ENCODE measurements at regions of chr18 and their contacts with region 1.

Region 1: GRCh38 chr18:58321986-58322385 is 278.0 kb downstream of the NEDD4L start:
- DNase-seq: peak; percentile 80
- H3K4me3 Mint-ChIP-seq: no peak overlapping the region
- H3K27ac Mint-ChIP-seq: no peak overlapping the region
- H3K4me1 Mint-ChIP-seq: peaks cover 16% of the 10 kb centered on the region
- H3K27me3 Mint-ChIP-seq: no peaks in the 10 kb centered on the region

Region 2: DNA sequence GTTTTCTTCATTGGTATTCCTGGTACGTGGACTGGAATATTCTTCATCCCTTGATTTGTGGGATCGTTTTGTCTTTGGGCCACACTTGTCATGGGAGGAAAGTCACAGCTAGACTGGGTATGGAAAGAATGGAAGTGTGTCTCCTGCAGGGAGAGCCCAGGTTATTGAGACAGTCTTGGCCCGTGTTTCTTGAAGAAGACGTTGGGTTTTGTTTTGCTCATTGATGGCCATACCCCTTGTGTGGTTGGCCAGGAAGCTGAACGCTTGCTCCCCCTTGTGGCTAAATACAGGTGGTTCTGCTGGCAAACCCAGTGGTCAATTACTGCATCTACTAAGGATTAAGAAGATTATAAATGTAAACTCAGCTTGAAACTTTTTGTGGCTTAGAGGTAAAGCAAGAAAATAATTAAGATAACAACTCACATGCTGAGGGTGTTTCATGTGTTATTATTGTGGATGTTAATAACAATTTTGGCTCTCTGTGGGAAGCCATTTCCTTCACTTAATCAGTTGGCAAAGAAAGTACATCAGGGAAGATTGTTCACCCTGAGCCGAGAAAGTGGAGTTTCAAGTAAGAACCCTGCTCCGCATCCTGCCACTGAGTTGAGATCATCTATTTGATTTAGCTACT is 186.2 kb before region 1 on chr18:
- CTCF ChIA-PET with region 1: no interaction called
- intact Hi-C with region 1: loop called (anchors 1 kb)
- DNase-seq: peak; percentile 74
- H3K4me3 Mint-ChIP-seq: no peak overlapping the region
- H3K27ac Mint-ChIP-seq: no peak overlapping the region
- H3K4me1 Mint-ChIP-seq: peaks cover 7% of the 10 kb centered on the region
- H3K27me3 Mint-ChIP-seq: peaks cover 9% of the 10 kb centered on the region

Region 3: GRCh38 chr18:58195278-58195765 is 126.7 kb before region 1 on chr18:
- CTCF ChIA-PET with region 1: interaction called, 5 read pairs
- intact Hi-C with region 1: loop called (anchors 1 kb)
- DNase-seq: peak; percentile 36
- H3K4me3 Mint-ChIP-seq: peak overlapping the region; percentile 80
- H3K27ac Mint-ChIP-seq: peak overlapping the region; percentile 12
- H3K4me1 Mint-ChIP-seq: peaks cover 16% of the 10 kb centered on the region
- H3K27me3 Mint-ChIP-seq: no peaks in the 10 kb centered on the region

Region 4: DNA sequence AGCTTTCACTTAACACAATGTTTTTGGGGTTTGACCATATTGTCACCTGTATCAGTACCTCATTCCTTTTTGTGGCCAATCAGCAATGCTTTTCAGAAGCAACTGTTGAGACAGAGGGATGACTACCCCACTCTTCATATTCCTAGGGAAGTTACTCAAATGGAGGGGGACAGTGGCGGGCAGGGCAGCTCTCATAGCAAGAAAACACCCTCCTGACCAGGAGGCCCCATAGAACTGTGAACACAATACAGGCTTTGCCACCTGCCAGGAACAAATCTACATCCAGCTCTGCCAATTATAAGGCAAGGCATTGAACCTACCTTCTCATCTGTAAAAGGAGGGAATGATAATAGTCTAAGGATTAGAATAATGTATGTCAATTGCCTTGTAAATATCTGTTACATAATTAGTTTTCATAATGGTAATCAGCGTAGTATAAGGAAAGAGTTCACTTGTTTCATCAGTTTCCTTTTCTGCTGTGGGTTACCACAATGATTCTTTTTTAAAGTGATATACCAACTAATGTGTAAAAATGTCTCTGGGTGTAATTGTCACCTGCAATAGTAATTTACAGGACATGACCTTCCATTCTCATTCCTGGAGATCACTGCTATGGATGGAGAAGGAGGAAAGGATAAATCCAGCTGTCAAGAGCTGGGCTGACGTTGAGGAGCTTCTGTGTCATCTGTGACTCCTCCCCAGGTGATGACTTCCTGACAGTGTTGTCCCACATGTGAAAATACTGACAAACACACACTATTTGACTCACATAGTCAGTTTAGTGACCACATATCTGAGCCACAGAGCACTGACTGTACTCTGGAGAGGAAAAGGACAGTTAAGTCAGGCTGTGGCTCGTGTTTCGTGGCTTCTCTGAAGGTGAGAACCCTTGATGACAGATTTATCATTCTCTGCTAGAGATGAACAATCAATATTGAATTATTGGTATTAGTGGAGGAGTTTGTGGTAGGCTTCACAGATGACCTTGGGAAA is 293.4 kb after region 1 on chr18:
- CTCF ChIA-PET with region 1: no interaction called
- intact Hi-C with region 1: no loop called
- DNase-seq: peak; percentile 91
- H3K4me3 Mint-ChIP-seq: peak overlapping the region; percentile 40
- H3K27ac Mint-ChIP-seq: peak overlapping the region; percentile 85
- H3K4me1 Mint-ChIP-seq: peaks cover 46% of the 10 kb centered on the region
- H3K27me3 Mint-ChIP-seq: no peaks in the 10 kb centered on the region

Region 5: GRCh38 chr18:58753976-58754375 is 432.0 kb after region 1 on chr18:
- CTCF ChIA-PET with region 1: no interaction called
- intact Hi-C with region 1: no loop called
- DNase-seq: no peak
- H3K4me3 Mint-ChIP-seq: no peak overlapping the region
- H3K27ac Mint-ChIP-seq: no peak overlapping the region
- H3K4me1 Mint-ChIP-seq: peaks cover 23% of the 10 kb centered on the region
- H3K27me3 Mint-ChIP-seq: no peaks in the 10 kb centered on the region